OCI-LY7 (cell line): ENCODE measurements at regions of chr18 and their contacts with region 1.

Region 1: DNA sequence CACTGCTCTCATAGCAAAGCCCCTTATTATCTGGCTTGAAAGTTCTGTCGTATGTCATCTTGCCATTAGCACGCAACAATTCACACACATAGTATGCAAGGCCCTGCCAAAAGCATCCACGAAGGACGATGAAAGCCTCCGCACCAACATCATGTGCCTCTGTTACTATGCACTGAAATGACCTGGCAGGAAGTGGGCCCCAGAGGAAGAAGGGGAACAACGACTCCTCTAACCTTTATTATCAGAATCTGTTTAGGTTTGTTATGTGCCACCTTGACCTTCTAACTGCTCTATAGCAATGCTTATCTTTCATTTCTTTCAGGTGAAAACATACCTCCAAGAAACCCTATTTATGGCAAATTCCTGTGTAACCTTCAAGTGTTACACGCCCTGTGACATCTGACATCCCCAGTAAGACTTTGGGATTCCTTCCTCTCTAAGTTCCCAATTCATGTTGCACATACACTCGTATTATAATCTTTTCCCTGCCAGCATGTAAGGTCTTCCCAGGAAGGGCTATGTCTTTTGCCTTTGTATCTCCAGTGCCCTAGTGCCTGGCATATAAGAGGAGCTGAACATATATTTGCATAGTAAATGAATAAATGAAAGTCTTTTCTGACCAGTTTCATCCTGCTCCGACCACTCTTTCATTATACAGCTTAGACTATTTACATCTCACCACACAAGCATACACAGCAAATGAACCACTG is 7.0 kb upstream of the NDUFV2 start:
- DNase-seq: peak; percentile 51
- H3K4me3 ChIP-seq: peak overlapping the region; percentile 42
- H3K27ac ChIP-seq: peak overlapping the region; percentile 32
- H3K4me1 ChIP-seq: peaks cover 17% of the 10 kb centered on the region
- CTCF ChIP-seq: no peak

Region 2: GRCh38 chr18:8858888-8859511 is 236.5 kb before region 1 on chr18:
- CTCF ChIA-PET with region 1: no interaction called
- POLR2A ChIA-PET with region 1: no interaction called
- intact Hi-C with region 1: no loop called
- DNase-seq: no peak
- H3K4me3 ChIP-seq: no peak overlapping the region
- H3K27ac ChIP-seq: no peak overlapping the region
- H3K4me1 ChIP-seq: peaks cover 23% of the 10 kb centered on the region
- CTCF ChIP-seq: no peak

Region 3: DNA sequence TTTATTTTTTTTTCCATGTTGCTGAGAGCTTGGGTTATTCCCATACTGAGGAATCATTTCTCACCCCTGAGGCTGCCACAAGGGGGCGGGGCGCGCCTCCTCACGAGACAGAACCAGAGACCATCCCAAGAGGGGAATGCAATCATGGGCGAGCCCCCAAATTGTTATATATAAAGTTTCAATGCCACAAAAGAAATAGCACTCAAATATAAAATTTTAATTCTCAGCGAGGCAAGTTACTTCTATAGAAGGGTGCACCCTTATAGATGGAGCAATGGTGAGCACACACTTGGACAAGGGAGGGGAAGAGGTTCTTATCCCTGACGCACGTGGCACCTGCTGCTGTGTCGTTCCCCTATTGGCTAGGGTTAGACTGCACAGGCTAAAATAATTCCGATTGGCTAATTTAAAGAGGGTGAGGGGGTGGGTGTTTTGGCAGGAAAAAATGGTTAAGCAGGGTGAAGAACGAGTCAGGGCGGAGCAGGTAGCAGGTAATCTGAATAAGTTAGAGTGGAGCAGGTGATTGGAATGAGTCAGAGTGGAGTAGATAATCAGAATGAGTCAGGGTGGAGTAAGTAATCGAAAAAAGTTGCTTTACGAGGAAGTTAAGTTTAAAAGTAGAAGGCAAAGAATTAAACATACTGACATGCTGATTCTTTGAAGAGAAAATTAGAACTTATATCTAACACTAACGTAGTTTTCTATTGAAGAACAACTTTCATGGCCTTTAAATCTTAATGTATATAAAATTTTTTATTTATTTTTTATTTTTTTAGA is 212.6 kb before region 1 on chr18:
- CTCF ChIA-PET with region 1: no interaction called
- POLR2A ChIA-PET with region 1: no interaction called
- intact Hi-C with region 1: no loop called
- DNase-seq: peak; percentile 80
- H3K4me3 ChIP-seq: no peak overlapping the region
- H3K27ac ChIP-seq: no peak overlapping the region
- H3K4me1 ChIP-seq: no peaks in the 10 kb centered on the region
- CTCF ChIP-seq: peak; percentile 74

Region 4: DNA sequence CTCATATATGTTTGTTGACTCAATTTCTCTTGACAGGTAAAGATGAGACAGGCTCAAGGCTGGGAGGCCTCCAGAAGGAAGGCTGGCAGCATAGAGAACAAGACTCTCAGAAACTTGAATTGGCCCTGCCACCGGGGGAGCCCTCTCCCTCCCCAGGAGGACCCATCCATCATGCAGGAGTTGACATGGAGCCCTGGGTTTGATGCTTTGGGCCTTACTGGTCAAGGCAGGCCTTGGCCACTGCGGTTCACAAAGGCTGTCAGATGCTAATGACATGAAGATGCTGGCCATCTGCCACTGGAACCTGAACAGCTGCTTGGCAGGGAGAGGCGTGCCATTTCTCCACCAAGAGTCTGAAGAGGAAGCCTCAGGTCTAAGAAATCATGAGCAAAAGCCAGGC is 196.5 kb before region 1 on chr18:
- CTCF ChIA-PET with region 1: no interaction called
- POLR2A ChIA-PET with region 1: no interaction called
- intact Hi-C with region 1: no loop called
- DNase-seq: peak; percentile 30
- H3K4me3 ChIP-seq: no peak overlapping the region
- H3K27ac ChIP-seq: no peak overlapping the region
- H3K4me1 ChIP-seq: peaks cover 25% of the 10 kb centered on the region
- CTCF ChIP-seq: peak; percentile 73

Region 5: GRCh38 chr18:9082711-9083510 is 12.5 kb before region 1 on chr18:
- CTCF ChIA-PET with region 1: no interaction called
- POLR2A ChIA-PET with region 1: interaction called, 10 read pairs
- intact Hi-C with region 1: no loop called
- DNase-seq: peak; percentile 38
- H3K4me3 ChIP-seq: no peak overlapping the region
- H3K27ac ChIP-seq: no peak overlapping the region
- H3K4me1 ChIP-seq: peaks cover 18% of the 10 kb centered on the region
- CTCF ChIP-seq: no peak

Region 6: DNA sequence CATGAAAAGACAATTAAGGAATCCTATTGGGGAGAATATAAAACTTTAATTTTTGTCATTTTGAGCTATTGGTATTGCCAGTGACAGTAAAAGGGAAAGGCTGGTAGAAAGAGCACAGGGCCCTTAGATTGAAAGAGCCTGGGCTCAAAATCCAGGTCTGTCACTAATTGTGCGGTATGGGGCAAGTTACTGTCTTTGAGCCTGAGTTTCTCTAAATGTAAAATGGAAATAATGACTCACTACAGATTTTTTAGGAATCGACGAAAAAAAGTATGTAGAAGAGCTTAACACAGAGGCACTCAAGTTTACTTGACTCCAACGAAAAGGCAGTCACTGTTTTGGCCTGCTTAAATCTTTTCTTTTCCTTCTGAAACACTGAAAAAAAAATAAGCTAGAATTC is 14.1 kb after region 1 on chr18:
- CTCF ChIA-PET with region 1: no interaction called
- POLR2A ChIA-PET with region 1: interaction called, 13 read pairs
- intact Hi-C with region 1: no loop called
- DNase-seq: no peak
- H3K4me3 ChIP-seq: no peak overlapping the region
- H3K27ac ChIP-seq: no peak overlapping the region
- H3K4me1 ChIP-seq: peaks cover 58% of the 10 kb centered on the region
- CTCF ChIP-seq: no peak

Region 7: GRCh38 chr18:9173770-9174233 is 78.3 kb after region 1 on chr18:
- CTCF ChIA-PET with region 1: no interaction called
- POLR2A ChIA-PET with region 1: no interaction called
- intact Hi-C with region 1: no loop called
- DNase-seq: no peak
- H3K4me3 ChIP-seq: no peak overlapping the region
- H3K27ac ChIP-seq: no peak overlapping the region
- H3K4me1 ChIP-seq: no peaks in the 10 kb centered on the region
- CTCF ChIP-seq: no peak